Right cardiac atrium (tissue), 5 donors: ENCODE measurements at regions of chrX and their contacts with region 1.

Region 1: DNA sequence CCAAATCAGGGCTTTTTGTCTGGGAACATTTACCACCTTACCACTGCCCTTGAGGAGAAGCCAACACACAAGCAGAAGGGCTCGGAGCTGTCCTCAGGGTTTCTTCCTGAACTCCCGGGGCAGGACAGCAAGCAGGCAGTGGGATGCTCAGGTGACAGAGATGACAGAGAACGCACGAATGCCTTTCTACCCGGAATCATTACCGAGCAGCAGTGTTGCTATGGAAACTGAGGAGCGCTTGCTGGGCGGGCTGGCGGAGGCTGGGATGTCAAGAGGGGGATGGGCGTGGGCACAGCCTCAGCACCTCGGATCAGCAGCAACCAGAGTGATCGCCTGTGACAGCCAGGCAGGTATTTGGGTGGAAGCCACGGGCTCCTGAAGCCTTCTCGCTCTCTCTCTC is 17.8 kb downstream of the SSR4 start:
- DNase-seq: peak in 1 of 3 donors; percentile 40
- ATAC-seq: no peak
- H3K4me3 ChIP-seq: no peak overlapping the region
- H3K27ac ChIP-seq: no peak overlapping the region
- H3K4me1 ChIP-seq: no peaks in the 10 kb centered on the region
- H3K27me3 ChIP-seq: no peaks in the 10 kb centered on the region

Region 2: DNA sequence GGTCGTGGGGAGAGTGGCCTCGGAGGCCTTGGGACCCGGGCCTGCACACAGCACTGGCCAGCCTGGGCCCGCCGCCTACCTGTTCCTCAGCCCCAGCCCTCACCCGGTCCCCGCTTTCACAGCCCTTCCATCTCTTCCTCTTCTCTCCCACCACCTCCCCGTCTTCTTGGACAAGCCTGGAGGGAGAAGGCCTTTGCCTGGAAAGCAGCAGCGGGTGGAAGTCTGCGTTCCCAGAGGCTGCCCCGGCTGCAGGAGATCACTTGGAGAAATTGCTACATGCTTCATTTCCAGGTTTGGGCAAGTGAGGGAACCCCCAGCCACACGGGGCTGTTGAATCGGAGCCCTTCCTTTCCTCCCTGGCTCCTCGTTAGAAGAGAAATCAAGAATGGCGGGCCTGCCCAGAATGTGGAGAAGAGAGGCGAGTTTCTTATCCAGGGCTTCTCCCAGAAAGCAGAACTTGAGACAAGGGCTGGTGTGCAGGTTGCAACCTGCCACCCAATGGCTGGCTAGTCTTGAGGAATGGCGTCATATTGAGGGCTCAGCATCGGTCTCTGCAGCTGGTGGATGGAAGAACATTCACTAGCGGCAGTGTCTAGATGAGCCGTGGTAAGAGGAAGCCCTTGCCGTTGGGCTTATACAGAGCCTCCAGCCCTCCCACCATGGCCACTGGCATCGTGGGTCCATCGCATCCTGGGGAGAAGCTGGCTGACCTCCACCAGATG is 19.4 kb after region 1 on chrX:
- intact Hi-C with region 1: loop called in 1 of 4 experiments (anchors 2 kb)
- DNase-seq: no peak
- ATAC-seq: no peak
- H3K4me3 ChIP-seq: no peak overlapping the region
- H3K27ac ChIP-seq: no peak overlapping the region
- H3K4me1 ChIP-seq: no peaks in the 10 kb centered on the region
- H3K27me3 ChIP-seq: no peaks in the 10 kb centered on the region

Region 3: DNA sequence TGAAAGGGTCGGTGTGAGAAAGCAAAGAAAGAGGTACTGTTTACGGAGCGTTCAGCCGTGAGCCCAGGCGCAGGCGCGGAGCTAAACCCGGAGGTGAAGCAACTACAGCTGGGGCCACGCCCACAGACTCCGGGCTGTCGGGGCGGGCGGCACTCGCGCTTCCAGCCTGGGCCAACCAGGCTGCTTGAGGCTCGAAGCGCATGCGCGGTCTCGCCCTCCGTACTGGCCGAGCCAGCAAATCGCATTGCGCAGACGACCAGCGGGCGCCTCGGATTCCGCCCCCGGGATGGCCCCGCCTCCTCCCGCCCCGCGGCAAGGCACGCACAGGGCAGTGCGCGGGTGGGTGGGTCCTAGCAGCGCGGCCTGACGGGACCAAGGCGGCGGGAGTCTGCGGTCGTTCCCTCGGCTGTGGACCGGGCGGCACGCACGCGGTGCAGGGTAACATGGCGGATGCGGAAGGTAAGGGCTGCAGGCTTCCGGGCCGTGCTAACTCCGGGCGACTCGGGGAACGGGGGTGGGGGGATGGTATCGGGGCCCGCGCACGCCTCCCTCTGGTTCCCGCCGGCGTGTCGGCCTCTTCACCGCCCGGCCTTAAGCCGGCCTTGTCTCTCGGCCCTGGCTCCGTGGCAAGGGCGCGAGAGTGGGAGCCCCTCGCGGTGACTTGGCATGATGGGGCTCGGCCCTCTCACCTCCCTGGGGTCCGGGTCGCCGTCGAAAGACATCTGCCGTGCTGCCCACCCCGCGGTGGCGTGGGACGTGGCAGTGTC is 950.5 kb after region 1 on chrX and contains the start of gene DKC1:
- intact Hi-C with region 1: no loop called
- DNase-seq: peak; percentile 97 to 99 (median 99)
- ATAC-seq: peak; percentile 98 to 99
- H3K4me3 ChIP-seq: peak within 1 kb of the TSS; percentile 42
- H3K27ac ChIP-seq: peak within 1 kb of the TSS; percentile 52
- H3K4me1 ChIP-seq: peaks cover 2% of the 10 kb centered on the region
- H3K27me3 ChIP-seq: no peaks in the 10 kb centered on the region
- total RNA-seq, gene DKC1: 18.7 to 27.0 (median 21.4) TPM